IMR-90 (cell line): ENCODE measurements at regions of chr12 and their contacts with region 1.

Region 1: DNA sequence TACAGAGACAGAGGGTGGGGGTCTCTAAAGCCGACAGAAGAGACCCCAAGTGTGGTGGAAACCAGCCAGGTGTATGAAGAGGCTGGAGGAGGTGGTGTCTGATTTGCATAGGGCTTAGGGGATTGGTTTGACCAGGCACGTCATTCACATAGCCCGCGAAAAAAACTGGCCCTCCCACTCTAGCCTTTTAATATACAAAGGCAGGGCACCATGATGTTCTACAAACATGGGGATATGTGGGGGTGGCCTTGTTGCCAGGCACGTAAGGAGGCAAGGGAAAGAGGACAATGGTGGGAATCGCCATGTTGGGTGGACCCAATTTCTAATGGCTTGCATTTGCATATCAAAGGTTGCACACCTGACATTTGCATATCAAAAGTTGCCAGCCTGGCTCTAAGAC is 13.2 kb downstream of the LALBA start:
- DNase-seq: no peak
- ATAC-seq: no peak
- H3K4me3 ChIP-seq: no peak overlapping the region
- H3K27ac ChIP-seq: no peak overlapping the region
- H3K4me1 ChIP-seq: no peaks in the 10 kb centered on the region
- H3K27me3 ChIP-seq: no peaks in the 10 kb centered on the region; the same call in 1 of the 2 replicates
- CTCF ChIP-seq: no peak
- POLR2A ChIP-seq: no peak
- RAD21 ChIP-seq: no peak

Region 2: GRCh38 chr12:48681738-48682532 is 125.3 kb after region 1 on chr12 and contains the start of gene KANSL2:
- CTCF ChIA-PET with region 1: no interaction called
- POLR2A ChIA-PET with region 1: interaction called, 17 read pairs
- dilution Hi-C with region 1: no loop called
- in situ Hi-C with region 1: no loop called
- intact Hi-C with region 1: no loop called
- DNase-seq: peak; percentile 99
- ATAC-seq: peak; percentile 97
- H3K4me3 ChIP-seq: peak within 1 kb of the TSS; percentile 88
- H3K27ac ChIP-seq: peak within 1 kb of the TSS; percentile 93
- H3K4me1 ChIP-seq: peaks cover 4% of the 10 kb centered on the region
- H3K27me3 ChIP-seq: no peaks in the 10 kb centered on the region
- CTCF ChIP-seq: no peak
- POLR2A ChIP-seq: peak; percentile 99
- RAD21 ChIP-seq: no peak
- total RNA-seq, gene KANSL2: 46.4 and 47.5 TPM in 2 replicates